ENCODE measurements at regions of chr9 and their contacts with region 1.

Region 1: GRCh38 chr9:5886114-5886939 is 4.4 kb upstream of the MLANA start:
- DNase-seq: peak; percentile 78 to 92
- H3K4me3 ChIP-seq: no peak overlapping the region
- H3K27ac ChIP-seq: no peak overlapping the region
- H3K4me1 ChIP-seq: no peaks in the 10 kb centered on the region
- H3K27me3 ChIP-seq: no peaks in the 10 kb centered on the region
- CTCF ChIP-seq: peak in 5 of 7 experiments; percentile 77 to 96 (median 77)
- EP300 ChIP-seq: no peak
- POLR2A ChIP-seq: no peak

Region 2: DNA sequence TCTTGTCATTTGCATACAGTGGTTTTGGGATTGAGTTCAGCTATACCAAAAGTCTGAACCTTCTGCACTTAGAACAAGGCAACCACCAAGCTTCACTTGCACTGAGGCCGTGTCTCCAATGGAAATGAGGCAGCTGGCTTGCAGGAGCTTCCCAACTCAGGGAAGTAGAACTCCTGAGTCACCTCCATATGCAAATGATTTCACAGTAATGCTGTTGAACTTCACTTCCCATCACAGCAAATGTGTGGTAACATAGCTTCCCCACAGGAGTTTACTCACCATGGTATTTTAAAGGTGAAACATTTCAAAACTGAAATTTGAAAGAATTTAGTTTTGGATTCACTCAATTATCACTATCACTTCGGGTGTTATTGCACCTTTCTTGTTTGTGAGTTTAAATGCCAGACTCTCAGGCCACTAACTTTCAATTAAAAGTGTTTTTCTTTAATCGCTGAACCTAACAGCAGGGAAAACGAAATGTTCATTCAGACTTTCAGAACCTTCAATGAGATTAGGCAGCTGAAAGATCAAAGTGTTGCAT is 427.0 kb before region 1 on chr9:
- intact Hi-C with region 1: no loop called
- DNase-seq: peak in 1 of 2 donors; percentile 32
- H3K4me3 ChIP-seq: no peak overlapping the region
- H3K27ac ChIP-seq: peak overlapping the region in 2 of 5 donors; percentile 36 to 46
- H3K4me1 ChIP-seq: peaks cover 0 to 18% (median 0%) of the 10 kb centered on the region in 4 donors
- H3K27me3 ChIP-seq: no peaks in the 10 kb centered on the region
- CTCF ChIP-seq: no peak
- EP300 ChIP-seq: no peak
- POLR2A ChIP-seq: no peak

Region 3: GRCh38 chr9:6055213-6055612 is 168.9 kb after region 1 on chr9:
- intact Hi-C with region 1: loop called (anchors 5 kb)
- DNase-seq: peak; percentile 49 to 91
- H3K4me3 ChIP-seq: no peak overlapping the region
- H3K27ac ChIP-seq: no peak overlapping the region
- H3K4me1 ChIP-seq: peaks cover 0 to 8% (median 3%) of the 10 kb centered on the region in 4 donors
- H3K27me3 ChIP-seq: no peaks in the 10 kb centered on the region
- CTCF ChIP-seq: peak in 5 of 7 experiments; percentile 40 to 75 (median 49)
- EP300 ChIP-seq: no peak
- POLR2A ChIP-seq: no peak

Region 4: GRCh38 chr9:6096821-6097220 is 210.5 kb after region 1 on chr9:
- intact Hi-C with region 1: no loop called
- DNase-seq: no peak
- H3K4me3 ChIP-seq: no peak overlapping the region
- H3K27ac ChIP-seq: no peak overlapping the region
- H3K4me1 ChIP-seq: no peaks in the 10 kb centered on the region
- H3K27me3 ChIP-seq: no peaks in the 10 kb centered on the region
- CTCF ChIP-seq: no peak
- EP300 ChIP-seq: no peak
- POLR2A ChIP-seq: no peak

Region 5: GRCh38 chr9:6243746-6244145 is 357.4 kb after region 1 on chr9:
- intact Hi-C with region 1: no loop called
- DNase-seq: no peak
- H3K4me3 ChIP-seq: no peak overlapping the region
- H3K27ac ChIP-seq: no peak overlapping the region
- H3K4me1 ChIP-seq: peaks cover 5 to 23% (median 17%) of the 10 kb centered on the region in 4 donors
- H3K27me3 ChIP-seq: no peaks in the 10 kb centered on the region
- CTCF ChIP-seq: no peak
- EP300 ChIP-seq: no peak
- POLR2A ChIP-seq: no peak